Adrenal gland (tissue), 19 donors: ENCODE measurements at regions of chr20 and their contacts with region 1.

Region 1: DNA sequence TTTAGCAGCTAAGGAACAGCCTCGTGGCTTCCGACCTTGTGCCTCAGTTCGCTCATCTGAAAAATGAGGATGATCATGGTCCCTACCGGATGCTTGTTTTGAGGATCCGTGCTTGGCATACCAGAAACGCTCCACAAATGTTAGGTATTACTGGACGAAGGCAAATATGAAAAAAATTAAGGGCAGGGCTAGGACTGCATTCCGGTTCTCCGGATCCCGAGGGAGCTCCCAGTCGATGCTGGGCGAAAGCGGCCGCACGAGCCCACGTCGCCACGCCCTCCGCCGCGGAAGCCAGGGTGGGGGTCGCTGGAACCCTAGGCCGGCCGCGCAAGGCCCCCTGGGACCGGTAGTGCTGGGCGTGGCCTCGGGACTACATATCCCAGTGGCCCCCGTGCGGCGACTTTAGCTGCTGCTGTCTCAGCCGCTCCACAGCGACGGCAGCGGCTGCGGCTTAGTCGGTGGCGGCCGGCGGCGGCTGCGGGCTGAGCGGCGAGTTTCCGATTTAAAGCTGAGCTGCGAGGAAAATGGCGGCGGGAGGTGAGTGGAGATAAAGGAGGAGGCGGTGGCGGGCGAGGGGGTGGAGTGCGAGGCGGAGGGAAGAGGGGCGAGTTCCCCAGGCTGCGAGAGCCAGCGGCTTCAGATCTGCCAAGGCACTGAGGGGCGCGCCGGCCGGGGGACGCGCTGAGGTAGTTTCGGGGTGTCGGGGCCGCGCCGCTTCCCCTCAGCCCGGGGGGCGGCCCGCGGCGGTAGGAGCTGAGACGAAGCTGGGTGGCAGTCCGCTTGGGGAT is at the start of gene NCOA3:
- DNase-seq: peak; percentile 94 to 97 (median 96)
- H3K4me3 ChIP-seq: peak within 1 kb of the TSS; percentile 49 to 99 (median 83)
- H3K27ac ChIP-seq: peak within 1 kb of the TSS; percentile 12 to 94 (median 90)
- H3K4me1 ChIP-seq: peaks cover 14 to 26% of the 10 kb centered on the region in 2 donors
- H3K27me3 ChIP-seq: no peaks in the 10 kb centered on the region
- CTCF ChIP-seq: peak; percentile 39 to 91 (median 64)
- POLR2A ChIP-seq: peak; percentile 96 to 99
- total RNA-seq, gene NCOA3: 19.0 to 35.6 (median 26.0) TPM

Region 2: GRCh38 chr20:47568001-47568407 is 66.3 kb after region 1 on chr20:
- intact Hi-C with region 1: loop called in 1 of 2 experiments (anchors 10 kb)
- DNase-seq: peak in 6 of 7 donors; percentile 48 to 71 (median 59)
- H3K4me3 ChIP-seq: no peak overlapping the region
- H3K27ac ChIP-seq: peak overlapping the region in 4 of 5 donors; percentile 28 to 71 (median 68)
- H3K4me1 ChIP-seq: peaks cover 13 to 25% of the 10 kb centered on the region in 2 donors
- H3K27me3 ChIP-seq: no peaks in the 10 kb centered on the region
- CTCF ChIP-seq: no peak
- POLR2A ChIP-seq: peak in 1 of 2 donors; percentile 19

Region 3: DNA sequence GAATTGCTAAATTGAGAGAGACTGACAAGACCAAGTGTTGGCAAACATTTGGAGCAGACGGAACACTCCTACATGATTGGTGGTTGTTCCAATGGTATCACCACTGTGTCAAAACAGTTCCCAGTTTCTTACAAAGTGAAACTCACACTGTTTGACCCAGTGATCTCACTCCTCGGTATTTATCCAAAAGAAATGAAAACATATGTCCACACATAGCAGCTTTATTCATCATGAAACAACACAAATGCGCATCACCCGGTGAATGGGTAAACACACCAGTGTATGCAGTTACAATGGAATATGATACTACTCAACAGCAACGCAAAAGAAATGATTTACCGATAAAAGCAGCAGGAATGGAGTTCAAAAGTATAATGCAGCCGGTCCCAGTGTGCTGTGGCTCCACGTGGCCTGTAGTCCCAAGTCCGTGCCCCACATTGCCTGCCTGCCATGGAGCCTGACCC is 357.7 kb after region 1 on chr20:
- intact Hi-C with region 1: no loop called
- DNase-seq: no peak
- H3K4me3 ChIP-seq: no peak overlapping the region
- H3K27ac ChIP-seq: no peak overlapping the region
- H3K4me1 ChIP-seq: no peaks in the 10 kb centered on the region
- H3K27me3 ChIP-seq: no peaks in the 10 kb centered on the region
- CTCF ChIP-seq: no peak
- POLR2A ChIP-seq: no peak